ENCODE measurements at regions of chr2 and their contacts with region 1.

Region 1: DNA sequence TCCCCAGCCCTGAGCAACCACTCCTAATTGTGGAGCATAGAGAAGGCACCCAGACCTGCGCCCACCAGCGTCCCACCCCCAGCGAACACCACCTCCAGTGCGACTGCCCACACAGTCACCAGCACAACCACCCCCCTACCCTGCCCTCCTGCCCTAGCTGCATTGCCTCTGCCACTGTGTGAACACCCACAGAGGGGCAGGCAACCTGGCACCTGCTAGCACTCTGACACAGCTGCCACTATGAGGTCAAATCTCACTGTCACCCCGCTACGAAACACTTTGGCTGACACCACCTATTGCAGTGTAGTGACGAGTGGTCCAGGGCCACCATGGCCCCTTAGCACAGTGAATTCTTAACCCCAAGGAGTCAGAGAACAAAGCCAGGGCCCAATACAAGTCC is 14.1 kb upstream of the EIF2AK3 start:
- DNase-seq: no peak
- ATAC-seq: no peak
- H3K4me3 ChIP-seq: no peak overlapping the region
- H3K27ac ChIP-seq: no peak overlapping the region
- H3K4me1 ChIP-seq: no peaks in the 10 kb centered on the region
- H3K27me3 ChIP-seq: no peaks in the 10 kb centered on the region
- CTCF ChIP-seq: no peak

Region 2: GRCh38 chr2:88451811-88452565 is 189.3 kb before region 1 on chr2:
- intact Hi-C with region 1: loop called in 1 of 10 experiments (anchors 10 kb)
- DNase-seq: peak in 1 of 2 donors; percentile 13
- ATAC-seq: no peak
- H3K4me3 ChIP-seq: peak overlapping the region in 4 of 10 donors; percentile 2 to 34 (median 28)
- H3K27ac ChIP-seq: no peak overlapping the region
- H3K4me1 ChIP-seq: peaks cover 0 to 13% (median 0%) of the 10 kb centered on the region in 9 donors
- H3K27me3 ChIP-seq: peaks cover 14 to 97% (median 93%) of the 10 kb centered on the region in 7 donors
- CTCF ChIP-seq: no peak